ENCODE measurements at regions of chr3 and their contacts with region 1.

Region 1: DNA sequence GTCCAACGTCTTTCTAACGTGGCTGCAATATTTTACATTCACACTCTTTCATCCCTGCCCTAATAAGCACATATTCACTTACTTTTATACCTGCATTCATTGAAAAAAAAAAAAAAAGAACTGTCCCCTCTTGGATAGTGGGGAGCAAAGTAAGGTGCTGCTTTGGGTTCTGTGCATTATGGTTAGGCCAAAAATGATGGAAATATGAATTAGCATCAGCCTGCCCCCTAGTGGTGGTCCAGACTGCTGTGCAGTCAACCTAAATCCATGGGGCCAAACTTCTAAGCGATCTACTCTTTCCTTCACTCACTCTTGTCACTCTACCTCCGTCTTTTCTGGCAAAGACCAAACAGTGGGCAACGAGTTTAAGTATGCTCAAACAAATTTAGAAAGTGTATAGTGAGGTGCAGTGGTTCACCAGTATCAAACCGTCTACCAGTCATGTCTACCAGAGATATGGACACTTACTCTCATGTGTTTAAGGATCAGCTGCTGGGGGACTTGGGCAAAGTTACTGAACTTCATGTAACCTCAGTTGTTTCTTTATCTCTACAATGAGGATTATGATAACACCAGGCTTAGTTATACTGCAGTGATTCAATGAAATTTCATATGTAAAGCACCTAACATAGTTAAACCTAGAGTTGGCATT is 61.5 kb upstream of the GRM7 start:
- DNase-seq: peak; percentile 22 to 41
- H3K4me3 ChIP-seq: no peak overlapping the region
- H3K27ac ChIP-seq: no peak overlapping the region
- H3K4me1 ChIP-seq: no peaks in the 10 kb centered on the region
- H3K27me3 ChIP-seq: no peaks in the 10 kb centered on the region
- CTCF ChIP-seq: peak in 5 of 6 experiments; percentile 38 to 72 (median 64)
- POLR2A ChIP-seq: no peak

Region 2: DNA sequence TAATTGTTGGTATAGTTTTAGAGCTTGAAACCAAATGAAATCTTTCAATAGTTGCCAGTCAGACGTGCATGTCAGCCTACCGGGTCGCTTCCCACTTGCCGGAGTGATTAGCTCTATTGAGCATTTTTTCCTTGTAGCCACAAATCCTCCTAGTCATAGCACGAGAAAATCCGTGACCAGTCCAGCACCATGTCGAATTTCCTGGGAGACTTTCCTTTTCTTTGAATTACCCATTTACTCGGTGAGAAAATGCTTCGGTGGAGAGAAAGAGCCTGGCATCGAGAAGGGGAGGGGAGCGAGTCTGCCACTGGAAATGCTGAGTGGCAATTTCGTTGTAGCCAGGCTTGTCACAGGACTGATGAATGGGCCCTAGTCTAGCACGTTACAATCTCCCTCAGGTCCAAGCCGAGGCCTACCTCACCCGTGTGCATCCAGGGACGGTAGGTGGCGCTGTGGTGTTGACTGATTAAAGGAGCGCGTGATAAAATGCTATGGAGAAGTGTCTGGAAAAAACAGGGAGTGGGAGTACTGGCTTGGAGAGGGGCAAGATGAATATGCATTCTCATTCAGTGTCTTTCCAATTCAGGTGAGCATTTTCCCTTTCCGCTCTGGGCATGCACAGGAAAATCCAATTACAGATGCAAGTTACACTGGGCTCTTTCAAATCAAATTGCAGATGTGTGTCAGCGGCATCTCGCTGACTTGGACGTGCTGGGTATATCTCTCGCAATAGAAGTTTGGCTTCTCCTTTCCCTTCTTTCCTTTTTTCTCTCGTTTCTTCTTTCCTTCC is 1373.1 kb before region 1 on chr3:
- intact Hi-C with region 1: loop called (anchors 10 kb)
- DNase-seq: peak; percentile 64 to 77
- H3K4me3 ChIP-seq: no peak overlapping the region
- H3K27ac ChIP-seq: no peak overlapping the region
- H3K4me1 ChIP-seq: no peaks in the 10 kb centered on the region
- H3K27me3 ChIP-seq: no peaks in the 10 kb centered on the region
- CTCF ChIP-seq: peak in 5 of 6 experiments; percentile 48 to 77 (median 61)
- POLR2A ChIP-seq: no peak